Endothelial cell of umbilical vein (primary cell): ENCODE measurements at regions of chr2 and their contacts with region 1.

Region 1: GRCh38 chr2:225735844-225736243 is 336.3 kb downstream of the NYAP2 start:
- DNase-seq: peak; percentile 89
- H3K4me3 ChIP-seq: no peak overlapping the region
- H3K27ac ChIP-seq: peak overlapping the region; percentile 34
- H3K4me1 ChIP-seq: peaks cover 44% of the 10 kb centered on the region
- H3K27me3 ChIP-seq: no peaks in the 10 kb centered on the region
- CTCF ChIP-seq: no peak
- POLR2A ChIP-seq: no peak

Region 2: DNA sequence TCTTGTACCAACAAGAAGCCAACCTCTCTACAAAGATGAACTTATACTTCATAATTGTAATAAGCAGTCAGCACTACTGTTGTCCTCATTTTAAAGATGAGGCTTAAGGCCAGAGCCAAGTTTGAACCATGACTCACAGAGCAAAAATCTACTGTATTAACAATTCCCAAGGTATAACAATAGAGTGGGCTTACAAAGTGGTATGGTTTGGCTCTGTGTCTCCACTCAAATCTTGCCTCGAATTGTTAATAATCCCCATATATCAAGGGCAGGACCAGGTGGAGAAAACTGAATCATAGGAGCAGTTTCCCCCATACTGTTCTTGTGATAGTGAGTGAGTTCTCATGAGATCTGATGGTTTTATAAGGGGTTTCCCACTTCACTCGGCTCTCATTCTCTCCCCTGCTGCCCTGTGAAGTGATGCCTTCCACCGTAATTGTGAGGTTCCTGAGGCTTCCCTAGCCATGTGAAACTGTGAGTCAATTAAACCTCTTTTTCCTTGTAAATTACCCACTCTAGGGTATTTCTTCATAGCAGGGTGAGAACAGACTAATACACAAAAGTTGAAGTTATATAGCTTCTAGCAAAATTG is 1759.1 kb before region 1 on chr2:
- CTCF ChIA-PET with region 1: no interaction called
- POLR2A ChIA-PET with region 1: no interaction called
- dilution Hi-C with region 1: no loop called
- intact Hi-C with region 1: loop called (anchors 5 kb)
- DNase-seq: peak; percentile 81
- H3K4me3 ChIP-seq: no peak overlapping the region
- H3K27ac ChIP-seq: peak overlapping the region; percentile 20
- H3K4me1 ChIP-seq: peaks cover 6% of the 10 kb centered on the region
- H3K27me3 ChIP-seq: no peaks in the 10 kb centered on the region
- CTCF ChIP-seq: no peak
- POLR2A ChIP-seq: no peak

Region 3: DNA sequence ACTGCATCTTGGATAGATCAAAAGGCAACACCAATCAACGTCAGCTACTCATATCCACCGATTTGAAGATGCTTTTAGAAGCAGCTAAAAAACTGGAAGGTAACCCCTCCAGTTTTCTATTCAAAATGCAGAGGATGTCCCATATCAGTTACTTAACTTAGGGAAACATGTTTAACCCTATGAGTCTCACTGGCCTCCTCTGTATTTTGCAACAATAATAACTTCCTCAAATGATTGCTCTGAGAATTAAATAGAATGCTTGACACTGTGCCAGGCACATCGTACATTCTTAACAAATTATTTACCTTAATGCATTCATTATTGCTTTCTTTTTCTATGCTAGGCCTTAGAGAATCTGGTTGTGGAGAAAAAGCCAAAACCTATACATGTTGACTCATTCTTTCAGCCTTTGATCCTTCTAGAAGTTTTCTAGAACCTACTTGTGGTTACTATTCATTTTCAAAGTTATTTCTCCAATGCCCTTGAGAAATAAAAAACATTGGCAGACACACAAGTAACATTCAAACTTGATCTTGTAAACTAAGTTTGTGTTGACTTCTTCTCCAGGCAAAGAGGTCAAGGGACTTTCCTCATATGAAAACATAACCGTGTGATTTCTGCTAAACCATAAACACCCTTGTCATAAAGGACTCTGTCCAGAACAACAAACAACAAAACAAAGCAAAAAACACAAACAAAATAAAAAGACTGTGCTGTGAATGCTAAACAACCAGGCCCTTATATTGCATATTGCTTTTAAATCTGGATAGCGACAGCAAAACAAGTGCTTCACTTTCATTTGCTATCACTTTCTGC is 698.2 kb before region 1 on chr2:
- CTCF ChIA-PET with region 1: no interaction called
- POLR2A ChIA-PET with region 1: no interaction called
- dilution Hi-C with region 1: no loop called
- intact Hi-C with region 1: loop called (anchors 10 kb)
- DNase-seq: no peak
- H3K4me3 ChIP-seq: no peak overlapping the region
- H3K27ac ChIP-seq: no peak overlapping the region
- H3K4me1 ChIP-seq: peaks cover 6% of the 10 kb centered on the region
- H3K27me3 ChIP-seq: peaks cover 0 to 6% of the 10 kb centered on the region in 2 experiments
- CTCF ChIP-seq: no peak
- POLR2A ChIP-seq: no peak

Region 4: GRCh38 chr2:225466891-225467604 is 268.8 kb before region 1 on chr2:
- CTCF ChIA-PET with region 1: no interaction called
- POLR2A ChIA-PET with region 1: no interaction called
- dilution Hi-C with region 1: no loop called
- intact Hi-C with region 1: no loop called
- DNase-seq: no peak
- H3K4me3 ChIP-seq: no peak overlapping the region
- H3K27ac ChIP-seq: no peak overlapping the region
- H3K4me1 ChIP-seq: no peaks in the 10 kb centered on the region
- H3K27me3 ChIP-seq: no peaks in the 10 kb centered on the region
- CTCF ChIP-seq: no peak
- POLR2A ChIP-seq: no peak

Region 5: DNA sequence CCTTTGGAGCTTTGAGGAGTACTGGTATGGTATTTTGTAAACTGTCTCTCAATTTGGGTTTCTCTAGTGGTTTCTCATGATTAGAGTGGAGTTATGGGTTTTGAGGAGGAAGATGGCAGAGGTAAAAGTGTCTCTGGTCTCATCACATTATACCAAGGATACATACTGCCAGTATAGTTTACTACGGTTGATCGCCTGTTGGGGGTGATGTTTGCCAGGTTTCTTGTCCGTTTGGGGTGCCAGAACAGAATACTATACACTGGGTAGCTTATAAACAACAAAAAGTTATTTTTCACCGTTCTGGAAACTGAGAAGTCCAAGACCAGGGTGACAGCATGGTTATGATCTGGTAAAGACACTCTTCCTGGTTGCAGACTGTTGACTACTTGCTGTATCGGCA is 42.6 kb before region 1 on chr2:
- CTCF ChIA-PET with region 1: no interaction called
- POLR2A ChIA-PET with region 1: no interaction called
- dilution Hi-C with region 1: no loop called
- intact Hi-C with region 1: no loop called
- DNase-seq: no peak
- H3K4me3 ChIP-seq: no peak overlapping the region
- H3K27ac ChIP-seq: no peak overlapping the region
- H3K4me1 ChIP-seq: no peaks in the 10 kb centered on the region
- H3K27me3 ChIP-seq: no peaks in the 10 kb centered on the region
- CTCF ChIP-seq: no peak
- POLR2A ChIP-seq: no peak

Region 6: DNA sequence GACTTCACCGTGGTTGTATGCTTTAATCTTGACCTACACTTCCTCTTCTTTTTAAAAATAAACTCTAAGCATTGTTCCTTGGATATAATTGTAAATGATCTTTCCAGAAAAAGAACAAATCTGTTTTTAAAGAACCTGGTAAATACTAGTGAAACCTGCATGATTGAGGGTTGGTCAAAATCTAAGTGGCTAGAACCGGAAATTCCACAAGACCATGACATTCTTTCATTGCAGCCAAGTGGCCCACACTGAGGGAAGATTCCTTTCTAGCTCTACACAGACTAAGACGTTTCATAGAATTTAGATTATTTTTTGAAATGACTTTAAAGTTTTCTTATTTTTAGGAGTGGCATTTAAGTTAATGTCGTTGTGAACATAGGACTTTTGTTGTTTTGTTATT is 20.4 kb after region 1 on chr2:
- CTCF ChIA-PET with region 1: no interaction called
- POLR2A ChIA-PET with region 1: no interaction called
- dilution Hi-C with region 1: no loop called
- intact Hi-C with region 1: loop called (anchors 1 kb)
- DNase-seq: no peak
- H3K4me3 ChIP-seq: no peak overlapping the region
- H3K27ac ChIP-seq: no peak overlapping the region
- H3K4me1 ChIP-seq: no peaks in the 10 kb centered on the region
- H3K27me3 ChIP-seq: no peaks in the 10 kb centered on the region
- CTCF ChIP-seq: no peak
- POLR2A ChIP-seq: no peak

Region 7: GRCh38 chr2:226835796-226836547 is 1100.1 kb after region 1 on chr2 and contains the start of gene RHBDD1:
- CTCF ChIA-PET with region 1: no interaction called
- POLR2A ChIA-PET with region 1: no interaction called
- dilution Hi-C with region 1: no loop called
- intact Hi-C with region 1: loop called (anchors 1 kb)
- DNase-seq: peak; percentile 93
- H3K4me3 ChIP-seq: peak within 1 kb of the TSS; percentile 74 to 84 (median 82)
- H3K27ac ChIP-seq: peak within 1 kb of the TSS; percentile 84
- H3K4me1 ChIP-seq: peaks cover 16% of the 10 kb centered on the region
- H3K27me3 ChIP-seq: no peaks in the 10 kb centered on the region
- CTCF ChIP-seq: no peak
- POLR2A ChIP-seq: peak; percentile 67
- total RNA-seq, gene RHBDD1: 16.1 and 19.4 TPM in 2 replicates